ENCODE measurements at regions of chr2 and their contacts with region 1.

Region 1: GRCh38 chr2:62163106-62163831 is 32.6 kb upstream of the B3GNT2 start:
- DNase-seq: no peak
- ATAC-seq: no peak
- H3K4me3 ChIP-seq: no peak overlapping the region
- H3K27ac ChIP-seq: no peak overlapping the region
- H3K4me1 ChIP-seq: peaks cover under 1 to 2% of the 10 kb centered on the region in 2 donors
- H3K27me3 ChIP-seq: no peaks in the 10 kb centered on the region

Region 2: DNA sequence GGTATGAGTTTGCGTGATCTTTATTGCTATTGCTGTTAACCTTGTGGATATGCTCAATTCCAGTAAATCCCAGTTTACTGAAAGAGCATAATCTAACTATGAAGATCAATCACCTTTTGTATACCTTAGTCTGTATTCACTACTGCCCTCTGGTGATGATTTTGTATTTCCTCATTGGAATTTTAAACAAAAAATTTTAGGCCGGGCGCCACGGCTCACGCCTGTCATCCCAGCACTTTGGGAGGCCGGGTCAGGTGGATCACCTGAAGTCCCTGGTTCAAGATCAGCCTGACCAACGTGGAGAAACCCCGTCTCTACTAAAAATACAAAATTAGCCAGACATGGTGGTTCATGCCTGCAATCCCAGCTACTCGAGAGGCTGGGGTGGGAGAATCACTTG is 252.7 kb before region 1 on chr2:
- intact Hi-C with region 1: loop called in 1 of 2 experiments (anchors 10 kb)
- DNase-seq: no peak
- ATAC-seq: no peak
- H3K4me3 ChIP-seq: no peak overlapping the region
- H3K27ac ChIP-seq: no peak overlapping the region
- H3K4me1 ChIP-seq: no peaks in the 10 kb centered on the region
- H3K27me3 ChIP-seq: no peaks in the 10 kb centered on the region

Region 3: DNA sequence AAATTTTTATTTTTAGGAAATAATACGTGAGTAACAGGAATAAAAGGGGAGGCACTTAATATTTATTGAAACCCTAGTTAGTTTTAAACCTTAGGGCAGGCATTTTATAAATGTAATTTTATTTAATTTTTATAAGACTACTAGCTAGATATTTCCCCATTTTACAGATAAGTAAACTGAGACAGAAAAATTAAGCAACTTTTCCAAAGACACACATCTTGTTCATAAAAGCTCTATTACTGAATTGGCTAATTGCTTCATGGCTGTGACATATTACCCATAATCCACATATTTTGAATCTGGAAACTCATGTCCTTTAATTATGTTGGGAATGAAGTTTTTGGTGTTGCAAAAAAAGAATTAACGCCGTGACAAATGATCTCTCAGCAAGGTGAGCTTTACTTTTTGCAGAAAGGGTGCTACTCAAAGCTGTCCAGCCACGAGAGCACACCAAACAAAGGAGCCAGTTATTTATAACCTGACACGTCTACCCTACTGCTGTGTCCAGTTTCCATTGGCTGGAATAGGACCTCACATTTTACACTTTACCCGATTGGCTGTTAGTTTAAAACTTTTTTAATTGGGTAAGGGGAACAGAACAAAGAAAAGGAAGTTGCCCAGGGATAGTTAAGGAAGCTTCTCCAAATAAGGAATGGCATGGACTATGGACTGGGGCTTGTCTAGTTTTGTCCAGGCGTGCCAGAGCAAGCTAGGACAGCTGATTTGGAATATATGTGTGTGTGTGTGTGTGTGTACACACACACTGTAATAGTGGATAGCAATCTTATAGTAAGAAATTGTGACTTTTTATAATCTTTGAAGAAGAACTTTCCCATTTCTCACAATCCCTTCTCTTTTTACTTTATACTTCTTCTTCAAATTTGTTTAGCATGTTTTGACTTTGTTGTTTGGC is 203.6 kb before region 1 on chr2:
- intact Hi-C with region 1: no loop called
- DNase-seq: no peak
- ATAC-seq: no peak
- H3K4me3 ChIP-seq: no peak overlapping the region
- H3K27ac ChIP-seq: no peak overlapping the region
- H3K4me1 ChIP-seq: peaks cover 0 to 2% of the 10 kb centered on the region in 2 donors
- H3K27me3 ChIP-seq: no peaks in the 10 kb centered on the region

Region 4: DNA sequence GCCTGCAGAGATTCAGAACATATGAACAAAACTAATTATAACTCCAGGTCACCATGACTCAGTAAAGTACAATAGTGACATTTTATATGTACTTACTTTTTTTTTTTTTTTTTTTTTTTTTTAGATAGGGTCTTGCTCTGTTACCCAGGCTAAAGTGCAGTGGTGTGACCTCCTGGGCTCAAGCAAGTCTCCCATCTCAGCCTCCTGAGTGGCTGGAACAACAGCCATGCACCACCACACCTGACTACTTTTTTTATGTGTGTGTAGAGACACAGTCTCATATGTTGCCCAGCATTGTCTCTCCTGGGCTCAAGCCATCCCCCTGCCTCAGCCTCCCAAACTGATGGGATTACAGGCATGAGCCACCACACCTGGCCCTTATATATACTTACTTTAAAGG is 98.0 kb before region 1 on chr2:
- intact Hi-C with region 1: no loop called
- DNase-seq: no peak
- ATAC-seq: no peak
- H3K4me3 ChIP-seq: no peak overlapping the region
- H3K27ac ChIP-seq: no peak overlapping the region
- H3K4me1 ChIP-seq: no peaks in the 10 kb centered on the region
- H3K27me3 ChIP-seq: no peaks in the 10 kb centered on the region

Region 5: GRCh38 chr2:62227386-62228075 is 64.3 kb after region 1 on chr2:
- intact Hi-C with region 1: no loop called
- DNase-seq: no peak
- ATAC-seq: no peak
- H3K4me3 ChIP-seq: no peak overlapping the region
- H3K27ac ChIP-seq: no peak overlapping the region
- H3K4me1 ChIP-seq: peaks cover 0 to 3% of the 10 kb centered on the region in 2 donors
- H3K27me3 ChIP-seq: no peaks in the 10 kb centered on the region

Measured in aorta (tissue), 5 donors.